ENCODE measurements at regions of chr2 and their contacts with region 1.

Region 1: DNA sequence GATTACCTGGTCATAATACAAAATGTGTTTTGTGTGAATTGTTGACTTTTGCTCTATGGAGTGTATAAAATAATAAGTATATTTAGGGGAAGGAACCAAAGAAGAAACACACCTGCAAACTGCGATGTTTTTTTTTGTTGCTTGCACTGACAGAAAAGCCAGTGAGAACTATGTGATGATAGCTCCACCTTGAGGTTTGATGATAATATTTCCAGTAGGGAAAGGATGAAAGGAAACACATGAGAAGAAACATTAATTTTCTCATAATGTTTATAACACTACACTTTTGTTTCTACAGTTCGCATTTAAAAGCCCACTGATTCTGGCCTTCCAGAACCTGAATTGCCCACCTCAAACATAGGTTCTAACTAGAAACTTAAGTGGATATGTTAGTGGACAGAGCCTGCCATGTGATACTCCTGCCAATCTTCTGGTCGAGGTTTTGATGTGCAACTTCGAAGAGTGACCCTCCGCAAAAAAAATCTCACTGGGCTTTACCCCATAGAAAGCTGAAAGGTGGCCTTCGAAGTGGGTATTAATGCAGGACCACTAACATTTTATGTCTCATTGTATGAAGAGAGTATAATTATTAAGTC is 476.4 kb upstream of the SPHKAP start:
- DNase-seq: peak; percentile 75
- H3K4me3 ChIP-seq: no peak overlapping the region
- H3K27ac ChIP-seq: no peak overlapping the region
- H3K4me1 ChIP-seq: peaks cover 19% of the 10 kb centered on the region
- H3K27me3 ChIP-seq: no peaks in the 10 kb centered on the region
- CTCF ChIP-seq: peak; percentile 69

Region 2: GRCh38 chr2:227890495-227891079 is 767.3 kb before region 1 on chr2:
- CTCF ChIA-PET with region 1: interaction called, 8 read pairs
- POLR2A ChIA-PET with region 1: no interaction called
- intact Hi-C with region 1: loop called (anchors 1 kb)
- DNase-seq: peak; percentile 83
- H3K4me3 ChIP-seq: no peak overlapping the region
- H3K27ac ChIP-seq: peak overlapping the region; percentile 62
- H3K4me1 ChIP-seq: peaks cover 12% of the 10 kb centered on the region
- H3K27me3 ChIP-seq: no peaks in the 10 kb centered on the region
- CTCF ChIP-seq: peak; percentile 68

Region 3: GRCh38 chr2:228048838-228049490 is 608.9 kb before region 1 on chr2:
- CTCF ChIA-PET with region 1: interaction called, 4 read pairs
- POLR2A ChIA-PET with region 1: no interaction called
- intact Hi-C with region 1: loop called (anchors 2 kb)
- DNase-seq: peak; percentile 88
- H3K4me3 ChIP-seq: no peak overlapping the region
- H3K27ac ChIP-seq: no peak overlapping the region
- H3K4me1 ChIP-seq: peaks cover 30% of the 10 kb centered on the region
- H3K27me3 ChIP-seq: no peaks in the 10 kb centered on the region
- CTCF ChIP-seq: peak; percentile 77

Region 4: DNA sequence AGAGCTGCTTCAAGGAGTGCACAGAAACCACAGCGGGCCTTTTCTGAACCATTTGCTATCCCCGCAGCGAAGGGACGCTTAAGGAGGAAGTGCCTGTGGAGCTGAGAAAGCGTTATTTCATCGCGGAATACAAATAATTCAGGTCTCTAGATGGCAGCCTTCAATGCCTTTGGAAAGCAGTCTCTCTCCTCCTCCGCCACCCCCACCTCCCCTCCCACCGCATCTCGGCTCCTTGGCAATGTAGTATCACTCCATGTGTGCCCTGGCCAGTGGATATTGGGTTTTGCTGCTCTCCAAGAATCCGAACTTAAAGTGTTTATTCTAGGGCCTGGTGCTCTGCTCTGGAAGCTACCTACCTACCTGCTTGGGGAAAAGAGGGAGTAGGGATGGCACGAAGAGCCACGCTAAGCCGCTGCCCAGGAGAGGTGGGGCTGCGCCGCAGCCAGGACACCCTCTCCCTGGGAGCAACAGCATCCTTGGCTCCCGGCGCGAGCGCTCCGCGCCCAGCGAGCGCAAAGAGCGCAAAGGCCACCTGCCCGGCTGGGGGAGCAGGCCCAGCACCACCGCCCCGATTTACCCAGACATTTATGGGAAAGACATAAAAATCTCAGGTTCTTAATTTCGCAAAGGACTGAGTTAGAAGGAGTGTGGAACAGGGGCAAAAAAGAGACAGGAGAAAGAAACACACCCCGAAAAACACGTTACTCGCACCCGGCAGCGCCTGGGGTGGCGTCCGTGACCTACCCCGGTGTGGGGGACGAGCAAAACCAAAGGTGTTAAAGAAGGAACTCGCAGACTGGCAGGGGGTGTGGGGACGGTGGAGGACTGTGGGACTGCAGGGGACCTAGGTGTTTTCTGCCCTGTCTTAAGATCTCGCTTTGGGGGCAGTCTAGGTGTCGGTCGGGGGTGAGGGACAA is 477.5 kb before region 1 on chr2:
- CTCF ChIA-PET with region 1: interaction called, 8 read pairs
- POLR2A ChIA-PET with region 1: no interaction called
- intact Hi-C with region 1: loop called (anchors 1 kb)
- DNase-seq: peak; percentile 96
- H3K4me3 ChIP-seq: peak overlapping the region; percentile 66
- H3K27ac ChIP-seq: peak overlapping the region; percentile 63
- H3K4me1 ChIP-seq: peaks cover 23% of the 10 kb centered on the region
- H3K27me3 ChIP-seq: no peaks in the 10 kb centered on the region
- CTCF ChIP-seq: peak; percentile 52

Region 5: GRCh38 chr2:228318218-228318617 is 339.7 kb before region 1 on chr2:
- CTCF ChIA-PET with region 1: interaction called, 3 read pairs
- POLR2A ChIA-PET with region 1: no interaction called
- intact Hi-C with region 1: loop called (anchors 2 kb)
- DNase-seq: peak; percentile 76
- H3K4me3 ChIP-seq: no peak overlapping the region
- H3K27ac ChIP-seq: no peak overlapping the region
- H3K4me1 ChIP-seq: peaks cover 14% of the 10 kb centered on the region
- H3K27me3 ChIP-seq: no peaks in the 10 kb centered on the region
- CTCF ChIP-seq: peak; percentile 71

Measured in A673 (cell line).